Vagina (tissue), 2 donors: ENCODE measurements at regions of chr4 and their contacts with region 1.

Region 1: GRCh38 chr4:147103403-147103946 is 157.8 kb upstream of the TTC29 start:
- DNase-seq: peak in 1 of 2 donors; percentile 91
- H3K4me3 ChIP-seq: no peak overlapping the region
- H3K27ac ChIP-seq: peak overlapping the region; percentile 58
- H3K4me1 ChIP-seq: peaks cover 5% of the 10 kb centered on the region
- H3K27me3 ChIP-seq: no peaks in the 10 kb centered on the region
- CTCF ChIP-seq: no peak
- POLR2A ChIP-seq: no peak

Region 2: DNA sequence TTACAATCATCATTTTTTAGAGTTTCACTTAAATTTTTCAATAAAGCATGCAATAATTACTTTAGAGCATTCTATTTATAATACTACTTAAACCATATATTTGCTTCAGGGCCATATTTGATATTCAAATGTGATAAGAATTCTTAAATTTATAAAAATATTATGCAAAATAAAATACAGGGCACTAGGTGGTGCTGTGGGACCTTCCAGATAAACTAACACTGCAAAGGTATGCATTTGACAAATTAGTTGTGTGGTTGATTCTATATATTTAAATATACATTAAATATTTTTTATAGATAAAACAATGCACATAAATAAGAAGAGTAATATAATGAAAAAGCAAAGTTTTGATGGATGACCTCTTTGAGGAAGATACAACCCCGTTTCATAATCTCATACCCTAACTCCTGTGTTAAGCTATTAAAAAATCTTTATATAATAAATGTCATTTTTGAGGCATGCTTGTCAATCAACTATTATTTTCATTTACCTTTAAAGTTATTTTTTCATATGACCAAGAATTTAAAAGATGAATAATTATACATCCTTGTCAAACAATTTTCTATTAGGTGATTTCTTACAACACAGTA is 760.8 kb before region 1 on chr4:
- intact Hi-C with region 1: loop called (anchors 10 kb)
- DNase-seq: no peak
- H3K4me3 ChIP-seq: no peak overlapping the region
- H3K27ac ChIP-seq: no peak overlapping the region
- H3K4me1 ChIP-seq: no peaks in the 10 kb centered on the region
- H3K27me3 ChIP-seq: no peaks in the 10 kb centered on the region
- CTCF ChIP-seq: peak in 2 of 3 experiments; percentile 6 to 44
- POLR2A ChIP-seq: no peak

Region 3: DNA sequence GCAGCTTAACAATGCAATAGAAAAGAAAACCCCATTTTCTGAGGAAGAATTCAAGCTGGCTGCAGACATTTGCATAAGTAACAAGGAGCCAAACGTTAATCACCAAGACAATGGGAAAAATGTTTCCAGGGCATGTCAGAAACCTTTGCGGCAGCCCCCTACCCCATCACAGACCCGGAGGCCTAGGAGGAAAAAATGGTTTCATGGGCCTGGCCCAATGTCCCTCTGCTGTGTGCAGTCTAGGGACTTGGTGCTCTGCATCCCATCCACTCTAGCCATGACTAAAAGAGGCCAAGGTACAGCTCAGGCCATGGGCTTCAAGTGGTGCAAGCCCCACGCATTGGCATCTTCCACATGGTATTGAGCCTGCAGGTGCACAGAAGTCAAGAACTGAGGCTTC is 1485.7 kb after region 1 on chr4:
- intact Hi-C with region 1: loop called (anchors 5 kb)
- DNase-seq: no peak
- H3K4me3 ChIP-seq: no peak overlapping the region
- H3K27ac ChIP-seq: no peak overlapping the region
- H3K4me1 ChIP-seq: no peaks in the 10 kb centered on the region
- H3K27me3 ChIP-seq: no peaks in the 10 kb centered on the region
- CTCF ChIP-seq: no peak
- POLR2A ChIP-seq: no peak